ENCODE measurements at regions of chr3 and their contacts with region 1.

Region 1: DNA sequence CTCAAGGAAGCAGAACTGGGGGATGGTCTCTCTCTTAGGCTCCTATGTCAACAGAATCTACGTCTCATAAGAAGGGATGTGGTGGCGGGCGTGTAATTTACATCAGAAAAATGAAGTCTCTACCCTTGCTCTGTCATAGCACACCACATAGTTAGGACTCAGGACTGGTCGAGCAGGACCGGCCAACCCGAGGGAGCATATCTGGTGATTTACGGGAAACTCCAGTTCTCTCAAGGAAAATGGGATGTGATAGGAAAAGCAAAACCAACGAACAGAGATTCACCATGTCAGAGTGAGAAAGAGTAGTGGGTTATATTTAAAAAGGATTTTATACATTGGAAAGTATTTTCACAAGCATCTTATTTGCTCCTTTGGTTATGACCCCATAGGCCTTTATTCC is 54.7 kb downstream of the IGF2BP2 start:
- DNase-seq: no peak
- H3K4me3 ChIP-seq: no peak overlapping the region
- H3K27ac ChIP-seq: no peak overlapping the region
- H3K4me1 ChIP-seq: peaks cover 6 to 36% (median 22%) of the 10 kb centered on the region in 4 experiments
- H3K27me3 ChIP-seq: no peaks in the 10 kb centered on the region

Region 2: DNA sequence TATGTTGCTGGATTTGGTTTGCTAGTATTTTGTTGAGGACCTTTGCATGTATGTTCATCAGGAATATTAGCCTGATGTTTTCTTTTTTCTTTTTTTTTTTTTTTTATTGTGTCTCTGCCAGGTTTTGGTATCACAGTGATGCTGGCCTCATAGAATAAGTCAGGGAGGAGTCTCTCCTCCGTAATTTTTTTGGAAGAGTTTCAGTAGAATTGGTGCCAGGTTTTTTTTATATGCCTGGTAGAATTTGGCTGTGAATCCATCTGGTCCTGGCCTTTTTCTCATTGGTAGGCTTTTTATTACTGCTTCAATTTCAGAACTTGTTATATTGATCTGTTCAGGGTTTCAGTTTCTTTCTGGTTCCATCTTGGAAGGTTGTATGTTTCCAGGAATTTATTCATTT is 792.3 kb before region 1 on chr3:
- CTCF ChIA-PET with region 1: no interaction called
- POLR2A ChIA-PET with region 1: no interaction called
- DNase-seq: no peak
- H3K4me3 ChIP-seq: no peak overlapping the region
- H3K27ac ChIP-seq: no peak overlapping the region
- H3K4me1 ChIP-seq: peaks cover 0 to 9% (median 1%) of the 10 kb centered on the region in 4 experiments
- H3K27me3 ChIP-seq: no peaks in the 10 kb centered on the region

Region 3: GRCh38 chr3:185702262-185703225 is 67.6 kb before region 1 on chr3:
- CTCF ChIA-PET with region 1: no interaction called
- POLR2A ChIA-PET with region 1: no interaction called
- DNase-seq: no peak
- H3K4me3 ChIP-seq: no peak overlapping the region
- H3K27ac ChIP-seq: peak overlapping the region in 1 of 2 experiments; percentile 34
- H3K4me1 ChIP-seq: peaks cover 2 to 34% (median 13%) of the 10 kb centered on the region in 4 experiments
- H3K27me3 ChIP-seq: no peaks in the 10 kb centered on the region

Region 4: GRCh38 chr3:185744997-185745843 is 24.9 kb before region 1 on chr3:
- CTCF ChIA-PET with region 1: interaction called, 63 read pairs
- POLR2A ChIA-PET with region 1: interaction called, 3 read pairs
- DNase-seq: peak in 1 of 3 donors; percentile 60
- H3K4me3 ChIP-seq: peak overlapping the region in 4 of 7 experiments; percentile 24 to 58 (median 42)
- H3K27ac ChIP-seq: peak overlapping the region; percentile 35 to 79
- H3K4me1 ChIP-seq: peaks cover 25 to 63% (median 51%) of the 10 kb centered on the region in 4 experiments
- H3K27me3 ChIP-seq: no peaks in the 10 kb centered on the region

Region 5: DNA sequence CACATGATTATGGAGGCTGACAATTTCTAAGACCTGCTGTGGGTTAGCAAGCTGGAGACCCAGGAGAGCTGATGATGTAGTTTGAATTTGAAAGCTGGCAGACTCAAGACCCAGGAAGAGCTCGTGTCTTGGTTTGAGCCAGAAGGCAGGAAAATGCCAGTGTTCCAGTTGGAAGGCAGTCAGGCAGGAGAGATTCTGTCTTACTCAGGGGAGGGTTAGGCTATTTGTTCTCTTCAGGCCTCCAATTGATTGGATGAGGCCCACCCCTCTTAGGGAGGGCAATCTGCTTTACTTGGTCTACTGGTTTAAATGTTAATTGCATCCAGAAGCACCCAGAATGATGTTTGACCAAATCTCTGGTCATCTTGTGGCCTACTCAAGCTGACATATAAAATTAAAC is 95.1 kb after region 1 on chr3:
- CTCF ChIA-PET with region 1: no interaction called
- POLR2A ChIA-PET with region 1: no interaction called
- DNase-seq: no peak
- H3K4me3 ChIP-seq: no peak overlapping the region
- H3K27ac ChIP-seq: no peak overlapping the region
- H3K4me1 ChIP-seq: no peaks in the 10 kb centered on the region
- H3K27me3 ChIP-seq: peaks cover 0 to 2% (median 0%) of the 10 kb centered on the region in 5 experiments

Region 6: GRCh38 chr3:185937689-185938463 is 167.8 kb after region 1 on chr3 and contains the start of gene TRA2B:
- CTCF ChIA-PET with region 1: no interaction called
- POLR2A ChIA-PET with region 1: no interaction called
- DNase-seq: peak; percentile 98 to 99 (median 99)
- H3K4me3 ChIP-seq: peak within 1 kb of the TSS; percentile 93 to 100 (median 99)
- H3K27ac ChIP-seq: peak within 1 kb of the TSS; percentile 100
- H3K4me1 ChIP-seq: peaks cover 21 to 34% (median 26%) of the 10 kb centered on the region in 4 experiments
- H3K27me3 ChIP-seq: no peaks in the 10 kb centered on the region